ENCODE measurements at regions of chr11 and their contacts with region 1.

Region 1: GRCh38 chr11:86456052-86456939 is 81.6 kb downstream of the CCDC81 start:
- DNase-seq: peak; percentile 95
- H3K4me3 Mint-ChIP-seq: no peak overlapping the region
- H3K27ac Mint-ChIP-seq: no peak overlapping the region
- H3K4me1 Mint-ChIP-seq: peaks cover 8% of the 10 kb centered on the region
- H3K27me3 Mint-ChIP-seq: no peaks in the 10 kb centered on the region

Region 2: DNA sequence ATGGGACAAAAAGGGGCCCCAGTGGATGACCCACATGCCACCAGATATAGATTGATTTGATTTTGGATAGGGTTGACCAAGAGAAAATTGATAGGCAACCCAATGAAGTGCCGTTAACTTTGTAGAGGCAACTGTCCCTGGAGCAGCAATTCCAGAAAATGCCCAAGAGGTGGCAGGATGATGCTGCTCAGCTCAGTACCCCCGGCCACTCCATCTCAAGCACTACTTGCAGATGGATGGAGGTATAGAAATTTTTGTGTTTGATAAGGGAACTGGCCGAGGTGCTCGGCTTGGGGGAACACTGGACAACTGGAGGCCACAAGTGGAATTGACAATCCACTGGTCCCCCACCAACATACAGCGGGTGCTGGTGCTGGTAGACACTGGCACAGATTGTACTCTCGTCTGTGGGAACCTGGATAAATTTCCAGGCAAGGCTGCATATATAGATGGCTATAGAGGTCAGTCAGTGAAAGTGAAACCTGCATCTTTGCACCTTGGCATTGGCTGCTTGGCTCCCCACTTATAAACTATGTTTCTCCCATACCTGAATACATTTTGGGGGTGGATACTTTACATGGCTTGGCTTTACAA is 514.8 kb before region 1 on chr11:
- CTCF ChIA-PET with region 1: no interaction called
- intact Hi-C with region 1: loop called (anchors 2 kb)
- DNase-seq: peak; percentile 76
- H3K4me3 Mint-ChIP-seq: no peak overlapping the region
- H3K27ac Mint-ChIP-seq: no peak overlapping the region
- H3K4me1 Mint-ChIP-seq: peaks cover 18% of the 10 kb centered on the region
- H3K27me3 Mint-ChIP-seq: no peaks in the 10 kb centered on the region

Region 3: GRCh38 chr11:86068951-86069407 is 387.3 kb before region 1 on chr11 and contains the start of gene PICALM:
- CTCF ChIA-PET with region 1: no interaction called
- intact Hi-C with region 1: no loop called
- DNase-seq: peak; percentile 99
- H3K4me3 Mint-ChIP-seq: peak within 1 kb of the TSS; percentile 95
- H3K27ac Mint-ChIP-seq: peak within 1 kb of the TSS; percentile 95
- H3K4me1 Mint-ChIP-seq: peaks cover 29% of the 10 kb centered on the region
- H3K27me3 Mint-ChIP-seq: no peaks in the 10 kb centered on the region
- total RNA-seq, gene PICALM: 38.6 to 42.3 TPM

Region 4: DNA sequence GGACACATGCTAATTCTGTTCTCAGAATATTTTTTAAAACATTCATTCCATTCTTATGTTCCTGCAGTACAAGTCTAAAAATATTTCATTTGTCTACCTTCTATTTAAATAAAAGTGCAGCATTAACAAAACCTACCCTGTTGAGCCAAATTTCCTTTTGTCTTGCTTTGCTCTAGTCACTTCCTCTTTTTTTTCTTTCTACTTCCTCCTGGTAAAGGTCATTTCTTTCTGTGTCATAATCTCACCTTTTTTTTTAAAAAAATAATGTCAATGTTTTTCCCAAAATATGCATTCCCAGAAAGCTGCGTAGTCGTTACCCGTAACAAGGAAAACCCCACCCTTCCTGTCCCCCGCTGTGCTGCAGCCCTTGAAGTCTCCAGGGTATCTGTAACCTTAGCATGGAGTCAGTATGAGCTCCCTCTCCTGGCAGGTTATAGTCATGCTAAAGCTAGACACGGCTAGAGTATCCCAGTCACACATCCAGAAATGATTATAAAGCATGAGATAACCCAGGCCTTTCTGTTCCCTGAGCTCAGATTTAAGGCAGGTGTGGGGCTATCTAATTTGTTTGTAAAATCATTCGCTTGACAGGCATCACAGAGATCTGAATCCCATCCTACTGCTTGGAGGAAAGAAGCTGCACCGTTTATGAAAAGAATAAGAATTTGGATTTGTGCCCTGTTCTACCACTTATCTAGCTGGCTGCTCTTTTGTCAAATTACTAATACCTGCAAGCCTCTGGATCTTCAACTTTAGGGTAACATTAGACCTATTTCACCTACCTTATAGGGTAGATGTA is 262.8 kb before region 1 on chr11:
- CTCF ChIA-PET with region 1: no interaction called
- intact Hi-C with region 1: no loop called
- DNase-seq: peak; percentile 74
- H3K4me3 Mint-ChIP-seq: peak overlapping the region; percentile 52
- H3K27ac Mint-ChIP-seq: peak overlapping the region; percentile 73
- H3K4me1 Mint-ChIP-seq: peaks cover 19% of the 10 kb centered on the region
- H3K27me3 Mint-ChIP-seq: no peaks in the 10 kb centered on the region

Region 5: GRCh38 chr11:86477495-86478155 is 21.3 kb after region 1 on chr11:
- CTCF ChIA-PET with region 1: no interaction called
- intact Hi-C with region 1: no loop called
- DNase-seq: no peak
- H3K4me3 Mint-ChIP-seq: no peak overlapping the region
- H3K27ac Mint-ChIP-seq: no peak overlapping the region
- H3K4me1 Mint-ChIP-seq: no peaks in the 10 kb centered on the region
- H3K27me3 Mint-ChIP-seq: no peaks in the 10 kb centered on the region

Region 6: DNA sequence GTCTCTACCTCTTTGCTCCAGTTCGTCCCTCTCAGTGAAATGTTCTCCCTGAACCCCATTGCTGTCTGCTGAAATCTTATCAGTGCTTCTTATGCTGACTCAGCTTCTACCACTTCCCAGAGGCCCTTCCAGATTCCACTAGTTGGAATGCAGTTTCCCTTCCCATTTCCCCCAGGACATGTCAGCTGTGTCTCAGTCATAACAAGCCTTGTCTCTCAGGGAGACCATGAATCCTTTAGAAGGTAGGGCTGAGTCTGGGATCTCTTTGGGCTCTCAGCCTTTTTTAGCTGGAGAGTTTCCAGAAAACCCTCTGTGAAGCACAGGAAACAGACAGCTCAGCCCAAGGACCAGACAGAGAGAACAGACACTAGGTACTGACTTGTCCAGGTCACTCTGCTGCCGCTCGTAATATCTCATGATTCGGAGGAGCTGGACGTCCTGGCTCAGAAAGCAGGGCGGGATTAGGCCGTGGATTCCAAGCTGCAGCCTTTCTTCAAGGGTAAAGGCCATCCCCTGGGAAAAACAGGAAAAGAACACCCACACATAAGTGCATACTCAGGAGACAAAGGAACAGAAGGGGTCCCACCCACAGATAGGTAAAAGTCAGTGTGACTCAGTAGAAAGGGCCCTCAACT is 103.1 kb after region 1 on chr11:
- CTCF ChIA-PET with region 1: no interaction called
- intact Hi-C with region 1: no loop called
- DNase-seq: no peak
- H3K4me3 Mint-ChIP-seq: no peak overlapping the region
- H3K27ac Mint-ChIP-seq: no peak overlapping the region
- H3K4me1 Mint-ChIP-seq: peaks cover 1% of the 10 kb centered on the region
- H3K27me3 Mint-ChIP-seq: no peaks in the 10 kb centered on the region

Region 7: DNA sequence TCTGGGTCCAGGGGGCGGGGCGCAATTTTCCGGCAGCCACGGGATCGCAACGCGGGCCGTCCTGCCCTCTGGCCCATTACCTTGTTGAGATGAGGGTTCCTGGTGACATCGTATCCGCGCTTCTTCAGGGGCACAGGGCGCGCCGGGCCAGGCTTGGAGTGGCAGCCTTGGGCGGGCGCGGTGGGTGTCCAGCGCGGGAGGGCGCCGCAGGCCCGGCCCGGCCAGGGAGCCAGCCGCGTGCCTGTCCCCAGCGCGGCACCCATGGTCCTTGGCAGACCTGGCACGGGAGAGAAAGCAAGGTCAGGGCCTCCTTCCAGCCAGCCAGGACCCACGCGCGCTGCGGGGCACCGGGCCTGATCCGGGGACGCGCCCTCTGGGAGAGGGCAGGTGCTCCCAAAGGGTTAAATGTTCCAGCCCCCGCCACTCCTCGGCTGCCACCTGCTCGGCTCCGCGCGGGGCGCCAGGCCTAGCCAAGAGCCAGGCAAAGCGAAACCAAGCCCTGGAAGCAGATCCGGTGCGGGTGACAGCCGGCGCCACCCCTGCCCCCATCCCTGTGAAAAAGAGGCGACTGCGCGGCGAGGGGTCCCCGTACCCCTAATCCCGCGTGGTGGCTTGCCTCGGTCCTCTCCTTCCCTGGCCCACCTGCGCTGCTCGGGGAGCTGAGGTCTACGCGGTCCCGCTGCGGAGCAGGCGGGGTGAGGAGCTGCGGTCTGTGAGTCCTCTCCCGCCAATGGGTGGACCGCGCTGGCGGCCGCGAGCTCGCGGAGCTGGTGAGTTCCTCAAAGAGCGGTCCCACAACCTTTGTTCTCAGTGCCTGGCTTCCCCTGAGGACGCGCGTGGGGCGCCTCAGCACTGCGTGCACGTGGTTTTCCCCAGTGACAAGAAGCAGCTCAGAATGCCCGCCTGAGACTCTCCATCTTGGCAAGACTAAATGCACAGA is 215.7 kb after region 1 on chr11 and contains the start of gene ME3:
- CTCF ChIA-PET with region 1: interaction called, 4 read pairs
- intact Hi-C with region 1: loop called (anchors 2 kb)
- DNase-seq: peak; percentile 69
- H3K4me3 Mint-ChIP-seq: peak within 1 kb of the TSS; percentile 71
- H3K27ac Mint-ChIP-seq: peak within 1 kb of the TSS; percentile 56
- H3K4me1 Mint-ChIP-seq: peaks cover 20% of the 10 kb centered on the region
- H3K27me3 Mint-ChIP-seq: peaks cover 12% of the 10 kb centered on the region
- total RNA-seq, gene ME3: 6.0 to 6.7 TPM

Region 8: DNA sequence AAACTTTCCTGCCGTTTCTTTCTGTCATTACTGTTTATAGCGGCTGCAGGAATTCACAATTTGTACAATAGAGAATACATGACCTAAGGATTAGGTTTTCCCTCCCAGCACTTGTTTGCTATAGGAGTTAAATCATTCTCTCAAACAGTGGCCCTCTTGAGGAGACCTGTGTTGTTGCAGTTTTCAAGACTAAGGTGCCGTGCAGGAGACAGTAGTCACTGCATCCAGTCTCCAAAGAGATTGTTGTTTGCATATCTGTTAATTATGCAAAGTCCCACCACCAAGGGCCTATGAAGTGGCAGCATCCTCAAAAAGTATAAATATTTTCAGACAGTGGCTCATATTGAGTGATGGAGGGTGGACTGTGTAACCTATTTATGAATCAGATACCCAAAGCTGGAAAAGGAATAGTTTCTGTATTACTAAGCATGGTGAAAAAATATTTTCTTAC is 346.3 kb after region 1 on chr11:
- CTCF ChIA-PET with region 1: interaction called, 4 read pairs
- intact Hi-C with region 1: loop called (anchors 1 kb)
- DNase-seq: peak; percentile 38
- H3K4me3 Mint-ChIP-seq: no peak overlapping the region
- H3K27ac Mint-ChIP-seq: no peak overlapping the region
- H3K4me1 Mint-ChIP-seq: peaks cover 53% of the 10 kb centered on the region
- H3K27me3 Mint-ChIP-seq: peaks cover 46% of the 10 kb centered on the region

Region 9: DNA sequence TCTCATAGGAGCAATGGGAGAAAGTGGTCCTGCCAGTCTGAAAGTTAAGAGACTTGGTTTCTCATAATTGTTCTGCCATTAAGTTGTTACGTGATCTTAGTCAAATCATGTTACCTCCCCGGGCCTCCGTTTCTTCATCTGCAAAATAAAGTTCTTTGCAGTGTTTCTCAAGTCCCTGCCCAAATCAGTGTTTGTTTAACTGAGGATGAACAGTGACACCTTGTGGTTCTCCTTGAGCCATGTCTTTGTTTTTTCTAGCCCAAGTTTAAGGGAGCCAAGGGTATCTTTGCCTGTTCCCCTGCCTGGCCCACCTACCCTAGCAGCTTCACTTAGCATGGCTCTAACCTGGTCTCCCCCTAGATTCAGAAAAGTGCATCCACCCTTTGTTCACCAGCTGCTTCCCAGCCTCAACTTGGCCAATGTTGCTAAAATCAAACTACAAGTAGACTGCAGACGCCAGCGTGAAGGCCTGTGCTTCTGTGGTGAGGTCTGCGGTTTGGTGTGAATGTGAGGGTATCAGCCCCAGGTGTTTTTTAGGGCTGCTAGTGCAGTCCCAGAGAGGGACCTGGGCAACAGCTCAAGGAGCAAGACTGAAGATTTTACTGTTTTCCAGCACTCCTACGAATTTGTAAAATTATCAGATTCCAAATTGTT is 463.4 kb after region 1 on chr11:
- CTCF ChIA-PET with region 1: interaction called, 3 read pairs
- intact Hi-C with region 1: loop called (anchors 1 kb)
- DNase-seq: peak; percentile 19
- H3K4me3 Mint-ChIP-seq: no peak overlapping the region
- H3K27ac Mint-ChIP-seq: no peak overlapping the region
- H3K4me1 Mint-ChIP-seq: peaks cover 4% of the 10 kb centered on the region
- H3K27me3 Mint-ChIP-seq: no peaks in the 10 kb centered on the region

Measured in activated naive CD4-positive, alpha-beta T cell treated with anti-CD3 and anti-CD28 coated beads for 36 hours (primary cell).